ENCODE measurements at regions of chr12 and their contacts with region 1.

Region 1: GRCh38 chr12:10364815-10365622 is 24.8 kb downstream of the KLRK1 start:
- DNase-seq: peak; percentile 79
- H3K4me3 ChIP-seq: peak overlapping the region; percentile 45 to 65 (median 59)
- H3K27ac ChIP-seq: peak overlapping the region; percentile 89 to 94 (median 90)
- H3K4me1 ChIP-seq: peaks cover 0 to 35% (median 31%) of the 10 kb centered on the region in 4 donors
- H3K27me3 ChIP-seq: no peaks in the 10 kb centered on the region
- CTCF ChIP-seq: no peak
- EP300 ChIP-seq: no peak
- POLR2A ChIP-seq: no peak

Region 2: GRCh38 chr12:10212201-10213131 is 152.6 kb before region 1 on chr12 and contains the start of gene GABARAPL1:
- intact Hi-C with region 1: loop called (anchors 2 kb)
- DNase-seq: peak; percentile 99
- H3K4me3 ChIP-seq: peak within 1 kb of the TSS; percentile 68 to 93 (median 88)
- H3K27ac ChIP-seq: peak within 1 kb of the TSS; percentile 95 to 100 (median 100)
- H3K4me1 ChIP-seq: peaks cover 0 to 25% (median 21%) of the 10 kb centered on the region in 4 donors
- H3K27me3 ChIP-seq: no peaks in the 10 kb centered on the region
- CTCF ChIP-seq: no peak
- EP300 ChIP-seq: peak; percentile 79 to 99 (median 91)
- POLR2A ChIP-seq: peak in 1 of 2 donors; percentile 56
- total RNA-seq, gene GABARAPL1: 78.5 to 122 (median 102) TPM

Region 3: DNA sequence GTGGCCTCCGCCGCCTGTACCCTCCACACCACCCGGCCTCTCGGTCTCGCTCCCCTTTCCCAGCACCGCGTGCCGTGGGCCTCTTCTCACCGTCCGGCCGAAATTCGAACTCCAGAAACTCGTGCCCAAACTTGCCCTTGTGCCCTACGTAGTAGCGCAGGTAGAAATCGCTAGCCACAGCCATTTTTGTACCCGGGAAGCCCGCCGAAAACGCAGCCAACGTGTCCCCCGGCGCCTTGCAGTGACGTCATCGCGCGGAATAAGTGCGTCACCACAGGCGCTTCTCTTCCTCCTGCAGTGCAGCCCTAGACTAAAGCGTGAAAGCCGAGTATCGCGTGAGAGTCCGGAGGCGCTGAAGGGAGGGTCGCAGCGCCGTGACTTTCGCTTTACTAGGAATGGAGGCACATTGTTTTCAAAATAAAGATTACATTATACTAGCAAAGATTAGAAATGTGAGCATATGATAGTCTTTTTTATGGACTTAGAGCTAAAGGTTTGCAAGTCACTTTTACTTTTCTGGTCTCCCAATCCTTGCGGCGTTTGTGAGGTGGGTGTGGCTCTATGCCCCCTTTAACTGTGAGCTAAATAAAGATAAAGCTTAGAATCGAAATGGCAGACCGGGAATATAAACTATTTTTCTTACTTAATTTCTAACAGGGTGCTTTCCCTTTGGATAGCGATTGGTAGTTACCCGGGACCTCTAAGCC is 248.5 kb after region 1 on chr12 and contains the start of gene MAGOHB:
- intact Hi-C with region 1: loop called (anchors 5 kb)
- DNase-seq: peak; percentile 98
- H3K4me3 ChIP-seq: peak within 1 kb of the TSS; percentile 61 to 89 (median 74)
- H3K27ac ChIP-seq: peak within 1 kb of the TSS; percentile 82 to 90 (median 90)
- H3K4me1 ChIP-seq: peaks cover 0 to 20% (median 14%) of the 10 kb centered on the region in 4 donors
- H3K27me3 ChIP-seq: no peaks in the 10 kb centered on the region
- CTCF ChIP-seq: no peak
- EP300 ChIP-seq: peak in 2 of 4 donors; percentile 51 to 71
- POLR2A ChIP-seq: peak; percentile 32 to 43
- total RNA-seq, gene MAGOHB: 8.6 to 17.4 (median 12.5) TPM

Region 4: GRCh38 chr12:11171145-11171968 is 806.3 kb after region 1 on chr12 and contains the start of gene SMIM10L1:
- intact Hi-C with region 1: loop called (anchors 10 kb)
- DNase-seq: peak; percentile 96
- H3K4me3 ChIP-seq: peak within 1 kb of the TSS; percentile 79 to 98 (median 90)
- H3K27ac ChIP-seq: peak within 1 kb of the TSS; percentile 95 to 99 (median 97)
- H3K4me1 ChIP-seq: peaks cover 0 to 53% (median 37%) of the 10 kb centered on the region in 4 donors
- H3K27me3 ChIP-seq: no peaks in the 10 kb centered on the region
- CTCF ChIP-seq: no peak
- EP300 ChIP-seq: no peak
- POLR2A ChIP-seq: peak; percentile 13 to 36
- total RNA-seq, gene SMIM10L1: 11.1 to 17.8 (median 14.3) TPM